GM10248 (cell line): ENCODE measurements at regions of chr2 and their contacts with region 1.

Region 1: GRCh38 chr2:86035883-86036668 is 69.6 kb downstream of the POLR1A start:
- DNase-seq: peak; percentile 87
- CTCF ChIP-seq: peak; percentile 51

Region 2: DNA sequence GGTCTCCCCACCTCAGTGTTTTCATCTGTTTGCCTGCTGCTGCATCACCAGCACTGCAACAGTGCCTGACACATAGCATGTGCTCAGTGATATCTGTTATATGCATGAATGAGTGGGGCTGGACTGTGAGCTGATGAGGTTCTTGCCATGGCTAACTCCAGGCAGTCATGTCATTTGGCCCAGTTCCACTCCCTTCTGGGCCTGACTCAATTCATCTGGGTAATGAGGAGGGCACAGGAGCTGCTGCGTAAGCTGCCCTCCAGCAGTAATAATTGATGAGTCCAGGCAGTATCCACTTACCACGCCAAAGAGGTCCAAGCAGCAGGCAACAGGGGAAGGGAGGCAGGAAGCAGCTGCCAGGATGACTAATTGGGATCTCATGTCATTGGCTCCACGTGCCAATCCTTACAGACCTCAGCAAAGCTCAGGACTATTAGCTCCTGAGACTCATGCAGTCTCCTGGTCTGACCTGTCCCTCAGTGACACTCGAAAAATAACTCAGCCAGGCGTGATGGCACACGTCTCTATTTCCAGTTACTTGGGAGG is 531.2 kb before region 1 on chr2:
- CTCF ChIA-PET with region 1: no interaction called
- POLR2A ChIA-PET with region 1: no interaction called
- DNase-seq: no peak
- CTCF ChIP-seq: no peak

Region 3: DNA sequence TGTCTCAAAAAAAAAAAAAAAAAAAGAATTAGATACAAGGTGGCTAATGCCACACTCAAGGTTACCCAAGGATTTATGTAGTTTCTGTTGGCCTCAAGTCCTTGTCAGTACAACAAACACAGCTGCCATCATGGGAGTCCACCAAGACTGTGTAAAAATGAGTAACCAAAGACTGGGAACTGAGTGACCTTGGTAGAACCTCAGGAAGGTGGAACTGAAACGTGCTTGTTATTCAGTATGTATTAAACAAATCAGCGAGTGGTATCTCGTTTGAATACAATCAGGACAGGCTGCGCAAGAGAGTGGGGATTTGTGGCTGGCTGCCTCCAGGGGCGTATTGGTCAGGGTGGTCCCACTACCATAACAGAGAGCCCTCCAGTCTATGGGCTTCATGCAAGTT is 366.5 kb before region 1 on chr2:
- CTCF ChIA-PET with region 1: no interaction called
- POLR2A ChIA-PET with region 1: no interaction called
- DNase-seq: peak; percentile 59
- CTCF ChIP-seq: no peak

Region 4: DNA sequence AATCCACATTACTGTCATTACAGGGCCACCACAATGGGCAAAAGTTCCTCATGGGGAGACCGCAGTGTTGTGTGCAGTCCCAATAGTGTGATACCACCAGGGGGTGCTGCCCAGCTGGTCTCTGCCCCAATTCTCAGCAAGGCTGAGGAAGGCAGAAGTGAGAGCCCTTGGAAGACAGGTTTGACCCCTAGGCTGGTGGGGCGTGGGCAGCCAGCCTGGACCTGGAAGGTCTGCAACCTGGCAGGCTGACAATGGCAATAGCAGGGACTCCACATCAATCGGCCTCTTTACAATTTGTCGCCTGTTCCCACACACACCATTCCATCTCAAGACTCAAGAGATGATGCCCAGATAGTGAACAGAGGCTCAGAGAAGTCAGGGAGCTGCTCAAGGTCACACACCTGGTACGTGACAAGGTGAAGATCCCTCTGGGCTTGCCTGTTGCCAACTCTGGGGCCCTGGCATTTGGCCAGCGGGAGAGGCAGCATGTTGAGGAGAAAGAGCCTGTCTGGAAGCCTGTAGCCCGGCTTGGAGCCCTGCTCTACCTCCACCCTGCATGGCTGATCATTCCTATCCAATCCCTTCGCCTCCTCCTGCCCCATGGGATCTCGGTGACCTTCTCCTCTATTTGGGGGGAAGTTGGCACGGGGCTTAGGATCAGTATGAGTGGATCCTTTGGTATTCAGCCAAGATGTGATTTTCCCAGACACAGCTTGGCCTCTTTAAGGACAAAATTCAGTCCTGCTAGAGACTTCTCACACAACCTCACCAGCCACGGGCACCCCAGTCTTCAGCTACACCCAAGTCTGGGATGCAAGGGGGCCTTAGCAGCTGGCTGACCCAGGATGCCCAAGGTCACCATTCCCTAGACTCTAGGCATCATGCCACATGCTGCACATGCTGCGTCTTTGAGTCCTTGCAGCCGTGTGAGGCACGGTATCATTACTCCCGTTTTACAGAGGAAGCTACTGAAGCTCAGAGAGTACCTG is 285.2 kb before region 1 on chr2:
- CTCF ChIA-PET with region 1: no interaction called
- POLR2A ChIA-PET with region 1: no interaction called
- DNase-seq: peak; percentile 57
- CTCF ChIP-seq: peak; percentile 35

Region 5: GRCh38 chr2:86025229-86025820 is 10.8 kb before region 1 on chr2:
- CTCF ChIA-PET with region 1: interaction called, 17 read pairs
- POLR2A ChIA-PET with region 1: no interaction called
- DNase-seq: no peak
- CTCF ChIP-seq: no peak

Region 6: GRCh38 chr2:86048888-86049287 is 12.8 kb after region 1 on chr2:
- CTCF ChIA-PET with region 1: interaction called, 20 read pairs
- POLR2A ChIA-PET with region 1: no interaction called
- DNase-seq: no peak
- CTCF ChIP-seq: no peak

Region 7: DNA sequence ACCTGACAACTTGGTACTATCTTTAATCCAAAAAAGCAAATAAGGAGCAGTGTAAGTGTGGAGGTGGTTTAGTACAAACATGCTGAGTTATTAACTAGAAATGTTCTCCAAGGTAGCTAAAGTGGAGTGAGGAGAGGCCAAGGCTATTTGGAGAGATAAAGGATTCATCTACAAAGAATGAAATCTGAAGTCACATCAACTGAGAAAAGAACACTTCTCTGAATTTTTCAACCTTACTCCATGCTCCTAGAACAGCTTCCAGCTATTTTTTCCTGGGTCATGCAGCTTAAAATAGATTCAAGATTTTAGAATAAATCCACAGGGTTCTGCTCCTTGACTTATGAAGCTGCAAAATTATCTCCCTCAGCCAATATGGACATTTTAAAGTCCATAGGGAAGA is 140.5 kb after region 1 on chr2:
- CTCF ChIA-PET with region 1: no interaction called
- POLR2A ChIA-PET with region 1: no interaction called
- DNase-seq: no peak
- CTCF ChIP-seq: no peak